SK-N-SH (cell line): ENCODE measurements at regions of chr1 and their contacts with region 1.

Region 1: GRCh38 chr1:63575340-63575826 is 17.8 kb upstream of the PGM1 start:
- DNase-seq: peak; percentile 27
- H3K4me3 ChIP-seq: no peak overlapping the region
- H3K27ac ChIP-seq: no peak overlapping the region
- H3K4me1 ChIP-seq: no peaks in the 10 kb centered on the region
- H3K27me3 ChIP-seq: no peaks in the 10 kb centered on the region
- CTCF ChIP-seq: peak; percentile 72
- EP300 ChIP-seq: no peak
- RAD21 ChIP-seq: peak; percentile 48

Region 2: DNA sequence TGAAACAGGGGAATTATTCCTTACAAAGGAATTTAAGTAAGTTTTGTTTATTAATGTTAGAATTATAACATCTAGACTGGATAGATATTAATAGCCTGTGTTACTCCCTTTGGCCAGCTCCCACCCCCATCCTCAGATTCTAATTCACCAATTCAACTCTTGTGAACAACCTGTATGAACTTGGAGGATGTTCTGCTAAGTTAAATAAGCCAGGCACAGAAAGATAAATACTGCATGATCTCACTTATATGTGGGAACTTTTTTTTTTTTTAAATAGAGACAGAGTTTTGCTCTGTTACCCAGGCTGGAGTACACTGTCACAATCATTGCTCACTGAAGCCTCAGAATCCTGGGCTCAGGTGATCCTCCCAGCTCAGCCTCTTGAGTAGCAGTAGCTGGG is 19.9 kb before region 1 on chr1:
- CTCF ChIA-PET with region 1: interaction called, 14 read pairs
- POLR2A ChIA-PET with region 1: no interaction called
- DNase-seq: no peak
- H3K4me3 ChIP-seq: no peak overlapping the region
- H3K27ac ChIP-seq: no peak overlapping the region
- H3K4me1 ChIP-seq: no peaks in the 10 kb centered on the region
- H3K27me3 ChIP-seq: no peaks in the 10 kb centered on the region
- CTCF ChIP-seq: no peak
- EP300 ChIP-seq: no peak
- RAD21 ChIP-seq: no peak

Region 3: DNA sequence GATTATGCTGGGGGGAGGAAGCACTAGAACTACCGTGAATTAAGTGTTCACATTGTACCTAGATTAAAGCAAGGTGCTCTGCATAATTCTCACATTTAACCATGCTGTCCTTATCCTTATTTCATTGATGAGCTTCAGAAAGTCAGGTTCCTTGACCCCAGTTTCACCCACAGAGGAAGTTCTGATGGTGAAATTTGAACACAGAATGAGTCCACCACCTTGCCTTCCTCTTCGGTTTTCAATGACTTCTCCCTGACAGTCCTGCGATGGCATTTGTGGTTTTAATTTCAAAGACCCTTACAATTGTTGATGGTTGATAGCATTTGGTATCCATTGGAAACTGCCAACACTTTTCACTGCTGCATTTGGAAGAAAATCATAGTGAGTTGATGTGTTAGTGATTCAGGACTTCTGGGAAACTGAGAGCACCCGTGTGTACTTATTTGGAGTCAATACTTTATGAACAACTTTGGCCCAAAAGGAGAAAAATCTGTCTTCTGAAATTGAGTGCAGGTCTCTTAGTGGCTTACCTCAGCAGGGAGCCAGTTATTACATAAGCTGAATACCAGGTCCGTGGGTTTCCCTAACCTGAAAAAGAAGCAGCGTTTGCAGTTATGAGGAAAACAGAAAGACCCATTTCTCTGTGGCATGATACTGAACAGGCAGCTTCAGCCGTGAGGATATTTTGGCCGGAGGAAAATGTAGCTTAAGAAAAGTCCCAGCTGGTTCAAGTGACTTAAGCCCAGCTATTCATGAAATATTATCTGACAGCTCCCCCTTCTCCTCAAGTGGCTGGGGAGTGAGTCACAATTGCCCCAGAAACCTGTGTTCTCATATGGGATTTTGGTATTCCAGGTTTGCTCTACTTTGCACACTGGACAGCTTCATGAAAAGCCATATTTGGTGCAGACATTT is 246.0 kb after region 1 on chr1:
- CTCF ChIA-PET with region 1: no interaction called
- POLR2A ChIA-PET with region 1: no interaction called
- DNase-seq: no peak
- H3K4me3 ChIP-seq: no peak overlapping the region; a peak in 1 of 4 replicates
- H3K27ac ChIP-seq: peak overlapping the region; percentile 2 to 76; a peak in 2 of 4 replicates
- H3K4me1 ChIP-seq: peaks cover 26 to 34% of the 10 kb centered on the region in 2 experiments; a peak in 3 of 4 replicates
- H3K27me3 ChIP-seq: no peaks in the 10 kb centered on the region
- CTCF ChIP-seq: no peak
- EP300 ChIP-seq: peak in 1 of 2 experiments; percentile 57; a peak in 1 of 4 replicates
- RAD21 ChIP-seq: no peak